CD8-positive, alpha-beta T cell (primary cell): ENCODE measurements at regions of chr14 and their contacts with region 1.

Region 1: DNA sequence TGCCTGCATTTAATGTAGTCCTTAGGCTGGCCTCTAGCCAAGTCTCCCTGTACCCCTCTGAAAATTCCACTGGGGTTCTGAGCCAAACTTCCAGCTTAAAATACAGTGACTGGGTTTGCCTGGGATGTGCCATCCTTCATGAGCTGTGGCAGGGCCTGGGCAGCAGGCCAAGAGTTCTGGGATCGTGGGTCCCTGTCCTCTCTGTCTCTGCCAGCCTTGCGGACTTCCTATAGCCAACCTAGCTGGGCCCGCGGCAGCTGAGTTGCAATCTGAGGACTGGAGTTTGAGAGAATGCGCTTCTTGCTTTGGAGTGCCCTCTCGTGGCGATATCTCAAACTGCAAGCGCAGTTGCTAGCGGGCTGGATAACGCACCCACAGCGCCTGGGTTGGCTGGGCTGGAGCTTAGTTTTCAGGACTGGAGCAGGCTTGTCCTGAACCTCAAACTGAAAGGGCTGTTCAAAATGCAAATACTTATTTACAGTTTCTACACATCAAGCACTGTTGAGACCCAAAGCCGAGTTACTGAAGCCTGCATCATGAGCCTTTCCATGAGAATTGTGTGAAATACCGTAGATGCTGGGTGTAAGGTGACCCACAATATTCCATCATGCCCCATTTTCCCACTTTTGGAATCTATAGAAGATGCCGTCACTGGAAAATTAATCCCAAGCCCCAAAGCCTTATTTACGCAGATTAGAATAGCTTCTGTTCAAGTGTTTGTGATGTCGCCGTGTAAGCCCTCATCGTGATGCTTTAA is 7.3 kb upstream of the IFI27L2 start:
- DNase-seq: peak; percentile 74 to 90 (median 85)
- ATAC-seq: peak; percentile 97
- H3K4me3 ChIP-seq: no peak overlapping the region
- H3K4me3 Mint-ChIP-seq: no peak overlapping the region
- H3K27ac ChIP-seq: no peak overlapping the region
- H3K27ac Mint-ChIP-seq: no peak overlapping the region
- H3K4me1 ChIP-seq: no peaks in the 10 kb centered on the region
- H3K4me1 Mint-ChIP-seq: no peaks in the 10 kb centered on the region
- H3K27me3 ChIP-seq: no peaks in the 10 kb centered on the region
- H3K27me3 Mint-ChIP-seq: peaks cover 5% of the 10 kb centered on the region
- CTCF ChIP-seq: peak; percentile 97

Region 2: DNA sequence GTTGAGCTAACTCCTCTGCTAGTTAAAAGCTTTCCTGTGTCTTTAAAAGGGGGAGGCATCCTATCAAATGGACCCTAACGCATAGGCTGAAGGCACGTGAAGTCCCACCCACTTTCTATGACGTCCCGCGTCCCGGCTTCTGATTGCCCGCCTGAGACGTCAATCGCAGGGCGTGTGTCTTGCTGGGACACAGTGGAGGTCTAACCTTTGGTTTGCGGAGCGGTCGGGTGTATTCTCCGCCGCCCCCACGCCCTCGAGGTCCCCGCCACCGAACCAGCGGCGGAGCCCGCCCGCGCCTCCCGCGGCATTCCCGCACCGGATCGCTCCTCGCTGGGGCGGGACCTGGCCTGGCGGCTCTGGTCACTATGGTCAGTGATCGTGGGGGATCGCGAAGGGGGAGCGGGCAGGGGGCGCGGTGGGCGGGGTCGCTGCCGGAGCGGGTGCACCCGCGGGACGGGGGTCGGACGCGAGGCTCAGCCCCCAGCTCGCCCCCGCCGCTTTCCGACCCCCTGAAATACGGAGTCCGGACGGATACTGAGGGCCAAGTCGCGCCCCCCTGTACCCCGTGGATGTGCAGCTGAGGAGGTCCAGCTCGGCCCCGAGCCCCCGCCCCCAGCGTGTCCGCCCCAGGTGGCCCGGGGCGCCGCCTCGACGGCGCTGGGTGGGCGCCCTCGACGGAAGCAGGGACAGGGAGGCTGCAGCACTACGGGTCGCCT is 110.4 kb before region 1 on chr14 and contains the start of gene OTUB2:
- CTCF ChIA-PET with region 1: interaction called, 184 read pairs
- POLR2A ChIA-PET with region 1: no interaction called
- intact Hi-C with region 1: no loop called
- DNase-seq: peak; percentile 91 to 98 (median 95)
- ATAC-seq: peak; percentile 100
- H3K4me3 ChIP-seq: peak within 1 kb of the TSS; percentile 24 to 42
- H3K4me3 Mint-ChIP-seq: peak within 1 kb of the TSS; percentile 84
- H3K27ac ChIP-seq: no peak within 1 kb of the TSS
- H3K27ac Mint-ChIP-seq: no peak within 1 kb of the TSS
- H3K4me1 ChIP-seq: no peaks in the 10 kb centered on the region
- H3K4me1 Mint-ChIP-seq: peaks cover 25% of the 10 kb centered on the region
- H3K27me3 ChIP-seq: no peaks in the 10 kb centered on the region
- H3K27me3 Mint-ChIP-seq: peaks cover 3% of the 10 kb centered on the region
- CTCF ChIP-seq: no peak
- total RNA-seq, gene OTUB2: not detected

Region 3: GRCh38 chr14:94045563-94046345 is 91.0 kb before region 1 on chr14:
- CTCF ChIA-PET with region 1: interaction called, 15 read pairs
- POLR2A ChIA-PET with region 1: no interaction called
- intact Hi-C with region 1: no loop called
- DNase-seq: no peak
- ATAC-seq: no peak
- H3K4me3 ChIP-seq: no peak overlapping the region
- H3K4me3 Mint-ChIP-seq: no peak overlapping the region
- H3K27ac ChIP-seq: no peak overlapping the region
- H3K27ac Mint-ChIP-seq: no peak overlapping the region
- H3K4me1 ChIP-seq: no peaks in the 10 kb centered on the region
- H3K4me1 Mint-ChIP-seq: no peaks in the 10 kb centered on the region
- H3K27me3 ChIP-seq: no peaks in the 10 kb centered on the region
- H3K27me3 Mint-ChIP-seq: no peaks in the 10 kb centered on the region
- CTCF ChIP-seq: no peak

Region 4: DNA sequence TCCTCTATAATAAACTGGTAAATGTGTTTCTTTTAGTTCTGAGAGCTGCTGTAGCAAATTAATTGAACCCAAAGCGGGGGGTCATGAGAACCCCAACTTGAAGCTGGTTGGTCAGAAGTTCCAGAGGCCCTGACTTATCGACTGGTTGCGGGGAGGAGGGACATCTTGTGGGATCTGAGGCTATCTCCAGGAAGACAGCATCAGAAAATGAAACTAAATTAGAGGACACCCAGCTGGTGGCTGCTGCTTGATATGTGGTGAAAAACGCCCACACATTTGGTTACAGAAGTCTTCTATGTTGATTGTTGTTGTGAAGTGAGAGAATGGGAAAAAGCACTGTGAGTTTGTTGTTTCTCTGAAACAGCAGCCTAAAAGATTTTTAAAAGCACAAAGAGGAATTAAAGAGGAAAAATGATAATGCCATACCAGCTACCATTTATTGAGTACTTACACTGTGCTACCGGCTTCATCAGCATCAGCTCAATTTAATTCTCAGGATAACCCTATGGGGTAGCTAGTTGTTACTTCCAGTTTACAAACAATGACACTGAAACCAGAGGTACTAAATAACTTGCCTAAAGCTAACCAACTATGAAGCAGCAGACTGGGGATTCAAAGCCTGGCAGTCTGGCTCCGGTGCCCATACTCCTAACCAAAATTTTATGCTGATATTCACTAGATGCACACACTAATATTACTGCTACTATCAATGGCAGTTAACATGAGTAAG is 80.0 kb before region 1 on chr14:
- CTCF ChIA-PET with region 1: interaction called, 15 read pairs
- POLR2A ChIA-PET with region 1: no interaction called
- intact Hi-C with region 1: no loop called
- DNase-seq: peak in 4 of 9 experiments; percentile 17 to 67 (median 38)
- ATAC-seq: peak; percentile 50
- H3K4me3 ChIP-seq: no peak overlapping the region
- H3K4me3 Mint-ChIP-seq: peak overlapping the region; percentile 8
- H3K27ac ChIP-seq: peak overlapping the region in 1 of 2 experiments; percentile 51
- H3K27ac Mint-ChIP-seq: peak overlapping the region; percentile 72
- H3K4me1 ChIP-seq: peaks cover 31% of the 10 kb centered on the region
- H3K4me1 Mint-ChIP-seq: peaks cover 66% of the 10 kb centered on the region
- H3K27me3 ChIP-seq: no peaks in the 10 kb centered on the region
- H3K27me3 Mint-ChIP-seq: no peaks in the 10 kb centered on the region
- CTCF ChIP-seq: no peak

Region 5: GRCh38 chr14:94161981-94162380 is 25.2 kb after region 1 on chr14:
- CTCF ChIA-PET with region 1: interaction called, 11 read pairs
- POLR2A ChIA-PET with region 1: interaction called, 4 read pairs
- intact Hi-C with region 1: no loop called
- DNase-seq: peak in 1 of 9 experiments; percentile 8
- ATAC-seq: no peak
- H3K4me3 ChIP-seq: no peak overlapping the region
- H3K4me3 Mint-ChIP-seq: no peak overlapping the region
- H3K27ac ChIP-seq: no peak overlapping the region
- H3K27ac Mint-ChIP-seq: no peak overlapping the region
- H3K4me1 ChIP-seq: peaks cover 39% of the 10 kb centered on the region
- H3K4me1 Mint-ChIP-seq: peaks cover 37% of the 10 kb centered on the region
- H3K27me3 ChIP-seq: no peaks in the 10 kb centered on the region
- H3K27me3 Mint-ChIP-seq: peaks cover 7% of the 10 kb centered on the region
- CTCF ChIP-seq: no peak

Region 6: DNA sequence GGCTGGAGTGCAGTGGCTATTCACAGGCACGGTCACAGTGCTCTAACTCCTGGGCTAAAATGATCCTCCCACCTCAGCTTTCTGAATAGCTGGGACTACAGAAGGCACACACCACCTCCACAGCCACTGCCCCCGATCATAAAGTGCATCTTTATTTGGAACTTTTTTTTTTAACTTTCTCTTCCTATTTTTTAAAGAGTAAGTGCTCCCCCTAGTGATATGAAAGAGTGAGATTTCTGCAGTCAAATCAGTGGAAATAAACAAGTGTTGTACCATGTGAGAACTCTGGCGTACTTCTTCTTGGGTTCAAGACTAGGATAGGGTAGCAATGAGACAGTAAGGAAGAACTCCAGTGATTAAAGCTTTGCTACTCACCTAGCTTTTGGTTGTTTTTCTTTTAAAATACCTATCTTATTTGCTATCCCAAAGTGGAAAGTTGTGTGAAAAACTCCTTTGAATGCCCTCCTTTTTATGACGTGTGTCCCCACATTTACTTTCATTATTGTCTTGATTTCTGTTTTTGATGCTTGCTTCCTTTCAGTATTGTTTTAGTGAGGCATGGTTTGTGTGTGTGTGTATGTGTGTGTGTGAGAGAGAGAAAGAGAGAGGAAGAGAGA is 44.0 kb after region 1 on chr14:
- CTCF ChIA-PET with region 1: interaction called, 48 read pairs
- POLR2A ChIA-PET with region 1: interaction called, 4 read pairs
- intact Hi-C with region 1: loop called (anchors 1 to 2 kb)
- DNase-seq: peak in 3 of 9 experiments; percentile 32 to 76 (median 68)
- ATAC-seq: peak; percentile 86
- H3K4me3 ChIP-seq: no peak overlapping the region
- H3K4me3 Mint-ChIP-seq: peak overlapping the region; percentile 49
- H3K27ac ChIP-seq: no peak overlapping the region
- H3K27ac Mint-ChIP-seq: peak overlapping the region; percentile 63
- H3K4me1 ChIP-seq: no peaks in the 10 kb centered on the region
- H3K4me1 Mint-ChIP-seq: peaks cover 9% of the 10 kb centered on the region
- H3K27me3 ChIP-seq: peaks cover 0 to 2% of the 10 kb centered on the region in 2 experiments
- H3K27me3 Mint-ChIP-seq: peaks cover 15% of the 10 kb centered on the region
- CTCF ChIP-seq: peak; percentile 81